ENCODE measurements at regions of chr1 and their contacts with region 1.

Region 1: GRCh38 chr1:26705788-26706311 is 10.0 kb downstream of the ARID1A start:
- DNase-seq: no peak
- H3K4me3 ChIP-seq: peak overlapping the region in 1 of 2 donors; percentile 10
- H3K27ac ChIP-seq: no peak overlapping the region
- H3K4me1 ChIP-seq: peaks cover 96% of the 10 kb centered on the region
- H3K27me3 ChIP-seq: no peaks in the 10 kb centered on the region
- CTCF ChIP-seq: no peak
- POLR2A ChIP-seq: no peak

Region 2: DNA sequence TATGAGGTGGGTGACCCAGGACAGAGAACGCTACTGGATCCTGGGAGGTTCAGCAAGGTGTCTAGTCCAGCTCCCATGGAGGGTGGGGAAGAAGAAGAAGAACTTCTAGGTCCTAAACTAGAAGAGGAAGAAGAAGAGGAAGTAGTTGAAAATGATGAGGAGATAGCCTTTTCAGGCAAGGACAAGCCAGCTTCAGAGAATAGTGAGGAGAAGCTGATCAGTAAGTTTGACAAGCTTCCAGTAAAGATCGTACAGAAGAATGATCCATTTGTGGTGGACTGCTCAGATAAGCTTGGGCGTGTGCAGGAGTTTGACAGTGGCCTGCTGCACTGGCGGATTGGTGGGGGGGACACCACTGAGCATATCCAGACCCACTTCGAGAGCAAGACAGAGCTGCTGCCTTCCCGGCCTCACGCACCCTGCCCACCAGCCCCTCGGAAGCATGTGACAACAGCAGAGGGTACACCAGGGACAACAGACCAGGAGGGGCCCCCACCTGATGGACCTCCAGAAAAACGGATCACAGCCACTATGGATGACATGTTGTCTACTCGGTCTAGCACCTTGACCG is 73.3 kb after region 1 on chr1:
- intact Hi-C with region 1: loop called (anchors 5 kb)
- DNase-seq: no peak
- H3K4me3 ChIP-seq: no peak overlapping the region
- H3K27ac ChIP-seq: no peak overlapping the region
- H3K4me1 ChIP-seq: peaks cover 17% of the 10 kb centered on the region
- H3K27me3 ChIP-seq: no peaks in the 10 kb centered on the region
- CTCF ChIP-seq: no peak
- POLR2A ChIP-seq: no peak

Region 3: GRCh38 chr1:26889551-26890466 is 184.0 kb after region 1 on chr1 and contains the start of gene GPN2:
- intact Hi-C with region 1: no loop called
- DNase-seq: no peak
- H3K4me3 ChIP-seq: peak within 1 kb of the TSS; percentile 77 to 81
- H3K27ac ChIP-seq: peak within 1 kb of the TSS; percentile 78
- H3K4me1 ChIP-seq: peaks cover 23% of the 10 kb centered on the region
- H3K27me3 ChIP-seq: no peaks in the 10 kb centered on the region
- CTCF ChIP-seq: no peak
- POLR2A ChIP-seq: no peak
- total RNA-seq, gene GPN2: 11.5 TPM

Measured in vagina (tissue), 2 donors.